ENCODE measurements at regions of chr13 and their contacts with region 1.

Region 1: GRCh38 chr13:32586080-32586900 is at the start of gene PDS5B:
- DNase-seq: peak; percentile 99
- ATAC-seq: peak; percentile 90
- H3K4me3 Mint-ChIP-seq: peak within 1 kb of the TSS; percentile 96
- H3K27ac Mint-ChIP-seq: peak within 1 kb of the TSS; percentile 91
- H3K4me1 Mint-ChIP-seq: peaks cover 41% of the 10 kb centered on the region
- H3K27me3 Mint-ChIP-seq: no peaks in the 10 kb centered on the region
- CTCF ChIP-seq: no peak
- total RNA-seq, gene PDS5B: 47.2 and 49.4 TPM in 2 replicates

Region 2: DNA sequence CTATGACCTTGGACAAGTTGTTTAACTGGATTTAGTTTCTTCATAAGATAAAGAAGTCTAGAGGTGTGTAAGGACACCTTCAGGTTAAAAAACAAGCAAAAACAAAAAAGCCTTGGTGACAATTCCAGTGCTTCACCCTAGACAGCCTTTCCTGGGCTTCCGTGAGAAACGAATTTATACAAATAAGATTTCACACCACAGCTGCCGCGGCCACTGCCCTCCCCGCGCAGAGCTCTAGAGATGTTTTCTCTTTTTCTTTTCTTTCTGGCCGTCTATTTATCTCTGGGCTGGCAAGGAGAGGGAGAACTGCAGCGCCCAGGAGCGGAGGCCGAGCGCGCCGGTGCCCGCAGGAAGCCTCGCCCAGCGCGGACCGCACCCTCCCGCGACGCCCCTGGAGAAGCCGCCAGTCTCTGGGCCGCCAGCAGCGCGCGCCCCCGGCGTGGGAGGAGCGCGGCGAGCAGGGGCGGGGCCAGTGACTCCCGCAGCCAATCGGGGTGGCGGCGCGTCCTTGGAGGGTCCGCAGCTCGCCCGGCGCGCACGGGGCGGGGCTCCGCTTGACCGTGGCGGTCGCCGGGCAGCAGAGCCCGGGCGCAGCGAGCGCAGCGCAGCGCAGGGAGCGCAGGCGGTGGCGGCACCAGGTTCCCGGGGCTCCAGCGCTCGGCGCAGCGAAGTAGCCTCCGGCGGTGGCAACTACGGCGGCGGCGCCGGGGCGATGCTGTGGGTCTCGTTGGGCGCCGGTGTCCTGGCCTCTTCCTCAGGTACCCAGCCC is 739.9 kb before region 1 on chr13:
- CTCF ChIA-PET with region 1: no interaction called
- POLR2A ChIA-PET with region 1: no interaction called
- intact Hi-C with region 1: loop called (anchors 5 kb)
- DNase-seq: peak; percentile 80
- ATAC-seq: peak; percentile 98
- H3K4me3 Mint-ChIP-seq: peak overlapping the region; percentile 83
- H3K27ac Mint-ChIP-seq: no peak overlapping the region
- H3K4me1 Mint-ChIP-seq: peaks cover 9% of the 10 kb centered on the region
- H3K27me3 Mint-ChIP-seq: peaks cover 27% of the 10 kb centered on the region
- CTCF ChIP-seq: no peak

Region 3: DNA sequence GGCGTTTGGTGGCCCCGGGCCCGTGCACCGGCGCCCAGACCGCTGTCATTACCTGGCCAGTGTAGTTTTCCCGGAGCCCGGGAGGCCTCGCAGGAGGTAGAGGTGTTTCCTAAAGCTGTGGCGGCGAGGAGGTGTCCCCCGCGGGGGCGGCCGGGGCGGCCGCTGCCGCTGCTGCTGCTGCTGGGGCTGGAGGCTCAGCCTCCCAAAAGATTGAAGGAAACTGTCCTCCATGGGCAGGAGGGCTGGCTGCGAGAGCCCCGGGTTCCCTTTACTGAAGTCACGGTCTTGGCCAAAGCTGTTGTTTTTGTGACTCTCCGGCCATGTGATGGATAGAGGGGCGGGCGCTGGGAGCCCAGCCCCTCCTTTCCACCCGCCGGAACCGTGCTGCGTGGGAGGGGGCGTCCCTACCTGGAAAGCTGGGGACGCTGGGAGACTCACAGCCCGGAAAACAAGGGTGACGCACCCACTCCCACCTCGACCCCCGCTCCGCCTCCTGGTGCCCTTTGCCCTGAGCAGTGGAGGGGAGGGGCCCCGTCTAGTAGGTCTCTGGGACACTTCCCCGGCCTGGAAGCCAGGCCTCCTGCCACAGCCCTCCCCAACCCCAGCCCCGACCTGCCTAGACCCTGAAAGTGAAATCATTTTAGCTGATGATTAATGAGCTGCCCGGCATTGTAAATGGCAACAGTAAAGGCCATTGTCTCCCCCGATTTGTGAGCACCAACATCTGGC is 158.3 kb before region 1 on chr13 and contains the start of gene N4BP2L1:
- CTCF ChIA-PET with region 1: interaction called, 4 read pairs
- POLR2A ChIA-PET with region 1: interaction called, 7 read pairs
- intact Hi-C with region 1: loop called (anchors 1 kb)
- DNase-seq: peak; percentile 77
- ATAC-seq: peak; percentile 73
- H3K4me3 Mint-ChIP-seq: peak within 1 kb of the TSS; percentile 95
- H3K27ac Mint-ChIP-seq: peak within 1 kb of the TSS; percentile 99
- H3K4me1 Mint-ChIP-seq: peaks cover 48% of the 10 kb centered on the region
- H3K27me3 Mint-ChIP-seq: no peaks in the 10 kb centered on the region
- CTCF ChIP-seq: no peak
- total RNA-seq, gene N4BP2L1: 23.0 and 24.3 TPM in 2 replicates

Region 4: GRCh38 chr13:32639502-32640105 is 53.3 kb after region 1 on chr13:
- CTCF ChIA-PET with region 1: interaction called, 24 read pairs
- POLR2A ChIA-PET with region 1: interaction called, 5 read pairs
- intact Hi-C with region 1: loop called (anchors 1 kb)
- DNase-seq: no peak
- ATAC-seq: peak; percentile 79
- H3K4me3 Mint-ChIP-seq: no peak overlapping the region
- H3K27ac Mint-ChIP-seq: no peak overlapping the region
- H3K4me1 Mint-ChIP-seq: peaks cover 42% of the 10 kb centered on the region
- H3K27me3 Mint-ChIP-seq: no peaks in the 10 kb centered on the region
- CTCF ChIP-seq: no peak

Region 5: DNA sequence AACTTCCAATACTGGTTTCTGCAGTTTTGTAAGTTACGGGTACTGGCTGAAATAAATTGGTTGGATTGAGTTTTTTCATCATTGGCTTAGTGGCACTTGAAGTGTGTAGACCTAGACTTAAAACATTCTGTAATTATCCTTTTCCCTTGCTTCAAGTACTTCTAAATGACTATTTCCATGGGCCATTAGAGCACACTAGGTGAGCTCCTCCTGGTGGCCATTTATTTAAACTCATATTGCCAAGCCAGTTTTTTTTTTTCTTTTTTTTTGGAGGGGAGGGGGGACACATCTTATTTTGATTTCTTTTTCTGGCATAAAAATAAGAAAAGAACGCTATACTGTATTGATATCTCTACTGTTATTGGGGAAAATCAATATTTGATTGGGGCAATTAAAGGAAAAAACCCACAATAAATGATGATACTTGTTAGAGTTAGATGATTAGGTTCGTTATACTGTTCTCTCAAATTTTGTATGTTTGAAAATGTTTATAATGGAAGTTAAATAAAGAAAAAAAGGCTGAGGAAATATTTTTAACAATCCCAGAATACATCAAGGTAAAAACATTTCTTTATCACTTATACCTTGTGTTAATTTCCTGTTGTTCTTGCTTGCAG is 82.8 kb after region 1 on chr13:
- CTCF ChIA-PET with region 1: interaction called, 22 read pairs
- POLR2A ChIA-PET with region 1: interaction called, 8 read pairs
- intact Hi-C with region 1: loop called (anchors 1 kb)
- DNase-seq: no peak
- ATAC-seq: no peak
- H3K4me3 Mint-ChIP-seq: no peak overlapping the region
- H3K27ac Mint-ChIP-seq: no peak overlapping the region
- H3K4me1 Mint-ChIP-seq: peaks cover 3% of the 10 kb centered on the region
- H3K27me3 Mint-ChIP-seq: no peaks in the 10 kb centered on the region
- CTCF ChIP-seq: no peak

Region 6: DNA sequence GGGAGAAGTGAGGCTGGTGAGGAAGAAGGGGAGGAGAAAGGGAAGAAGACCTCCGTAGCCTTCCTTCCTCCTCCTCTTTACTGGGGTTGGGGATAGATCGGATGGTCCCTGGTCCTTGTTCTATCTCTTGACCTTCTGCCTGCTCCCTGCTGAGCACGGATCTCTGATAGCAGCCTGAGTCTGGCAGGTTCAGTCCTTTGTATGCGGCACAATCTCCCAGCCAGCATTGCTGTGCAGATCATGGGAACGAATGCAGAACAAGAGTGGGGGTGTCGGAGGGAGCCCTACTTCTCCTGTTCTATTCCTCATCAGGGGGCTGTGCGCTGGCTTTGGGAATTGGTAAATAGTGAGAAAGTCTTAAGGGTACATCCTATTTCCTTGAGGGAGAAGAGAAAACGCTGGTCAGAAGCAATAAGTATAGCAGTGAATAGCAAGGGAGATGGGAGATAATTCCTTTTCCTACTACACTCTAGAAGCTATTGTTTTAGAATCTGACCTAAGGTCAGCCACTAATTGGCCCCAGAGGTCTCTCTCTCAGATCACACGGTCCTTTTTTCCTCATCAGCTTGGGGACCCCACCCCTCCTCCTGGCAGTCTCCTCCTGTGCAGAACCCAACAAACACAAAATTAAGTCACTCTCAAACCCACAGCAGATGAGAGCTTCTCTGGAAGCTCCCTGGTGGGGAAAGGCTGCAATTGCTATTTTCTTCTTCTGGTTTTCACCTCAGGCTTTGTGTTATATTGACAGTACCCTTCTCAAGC is 470.9 kb after region 1 on chr13:
- CTCF ChIA-PET with region 1: no interaction called
- POLR2A ChIA-PET with region 1: no interaction called
- intact Hi-C with region 1: no loop called
- DNase-seq: no peak
- ATAC-seq: no peak
- H3K4me3 Mint-ChIP-seq: no peak overlapping the region
- H3K27ac Mint-ChIP-seq: no peak overlapping the region
- H3K4me1 Mint-ChIP-seq: no peaks in the 10 kb centered on the region
- H3K27me3 Mint-ChIP-seq: peaks cover 2% of the 10 kb centered on the region
- CTCF ChIP-seq: no peak

Region 7: GRCh38 chr13:33228648-33229445 is 642.6 kb after region 1 on chr13:
- CTCF ChIA-PET with region 1: no interaction called
- POLR2A ChIA-PET with region 1: no interaction called
- intact Hi-C with region 1: loop called (anchors 5 kb)
- DNase-seq: no peak
- ATAC-seq: peak; percentile 62
- H3K4me3 Mint-ChIP-seq: no peak overlapping the region
- H3K27ac Mint-ChIP-seq: no peak overlapping the region
- H3K4me1 Mint-ChIP-seq: peaks cover 2% of the 10 kb centered on the region
- H3K27me3 Mint-ChIP-seq: peaks cover 4% of the 10 kb centered on the region
- CTCF ChIP-seq: peak; percentile 97

Region 8: DNA sequence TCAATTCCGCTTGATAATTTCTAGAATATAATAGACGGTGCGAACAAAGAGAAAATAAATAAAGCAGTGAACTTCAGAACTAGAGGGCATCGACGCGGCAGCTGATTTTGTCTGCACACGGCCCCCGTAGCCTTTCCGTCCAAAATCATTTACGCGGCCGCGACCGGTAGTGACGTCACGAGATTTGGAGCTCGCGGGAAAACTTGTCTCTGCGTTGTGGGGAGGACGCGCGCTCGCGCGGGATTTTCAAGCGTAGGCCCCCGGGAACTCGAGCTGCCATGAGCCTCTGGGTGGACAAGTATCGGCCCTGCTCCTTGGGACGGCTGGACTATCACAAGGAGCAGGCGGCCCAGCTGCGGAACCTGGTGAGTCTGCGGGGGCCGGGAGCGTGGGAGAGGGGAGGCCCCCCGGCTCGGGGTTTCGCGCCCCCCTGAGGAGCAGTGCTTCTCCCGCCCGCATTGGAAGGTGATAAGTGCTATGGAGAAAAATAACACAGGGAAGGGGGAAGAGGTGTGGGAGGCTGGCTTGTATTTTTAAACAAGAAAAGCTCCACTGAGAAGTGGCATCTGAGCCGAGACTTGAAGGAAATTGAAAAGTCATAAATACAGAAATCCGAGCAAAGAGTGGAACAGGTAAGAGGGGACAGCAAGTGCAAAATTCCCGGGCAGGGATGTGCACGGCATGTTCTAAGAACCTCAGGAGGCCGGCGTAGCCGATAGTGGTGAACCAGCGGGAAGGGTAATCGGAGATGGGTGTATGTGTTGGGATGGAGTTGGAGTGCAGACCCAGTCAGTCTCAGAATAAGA is 1231.8 kb after region 1 on chr13 and contains the start of gene RFC3:
- CTCF ChIA-PET with region 1: no interaction called
- POLR2A ChIA-PET with region 1: no interaction called
- intact Hi-C with region 1: loop called (anchors 2 kb)
- DNase-seq: peak; percentile 84
- ATAC-seq: peak; percentile 94
- H3K4me3 Mint-ChIP-seq: peak within 1 kb of the TSS; percentile 93
- H3K27ac Mint-ChIP-seq: peak within 1 kb of the TSS; percentile 91
- H3K4me1 Mint-ChIP-seq: peaks cover 19% of the 10 kb centered on the region
- H3K27me3 Mint-ChIP-seq: peaks cover 5% of the 10 kb centered on the region
- CTCF ChIP-seq: no peak
- total RNA-seq, gene RFC3: 13.5 and 14.3 TPM in 2 replicates

Measured in activated B cell treated with CpG ODN at 0.5 μM for 24 hours (primary cell).